ENCODE measurements at regions of chr1 and their contacts with region 1.

Region 1: DNA sequence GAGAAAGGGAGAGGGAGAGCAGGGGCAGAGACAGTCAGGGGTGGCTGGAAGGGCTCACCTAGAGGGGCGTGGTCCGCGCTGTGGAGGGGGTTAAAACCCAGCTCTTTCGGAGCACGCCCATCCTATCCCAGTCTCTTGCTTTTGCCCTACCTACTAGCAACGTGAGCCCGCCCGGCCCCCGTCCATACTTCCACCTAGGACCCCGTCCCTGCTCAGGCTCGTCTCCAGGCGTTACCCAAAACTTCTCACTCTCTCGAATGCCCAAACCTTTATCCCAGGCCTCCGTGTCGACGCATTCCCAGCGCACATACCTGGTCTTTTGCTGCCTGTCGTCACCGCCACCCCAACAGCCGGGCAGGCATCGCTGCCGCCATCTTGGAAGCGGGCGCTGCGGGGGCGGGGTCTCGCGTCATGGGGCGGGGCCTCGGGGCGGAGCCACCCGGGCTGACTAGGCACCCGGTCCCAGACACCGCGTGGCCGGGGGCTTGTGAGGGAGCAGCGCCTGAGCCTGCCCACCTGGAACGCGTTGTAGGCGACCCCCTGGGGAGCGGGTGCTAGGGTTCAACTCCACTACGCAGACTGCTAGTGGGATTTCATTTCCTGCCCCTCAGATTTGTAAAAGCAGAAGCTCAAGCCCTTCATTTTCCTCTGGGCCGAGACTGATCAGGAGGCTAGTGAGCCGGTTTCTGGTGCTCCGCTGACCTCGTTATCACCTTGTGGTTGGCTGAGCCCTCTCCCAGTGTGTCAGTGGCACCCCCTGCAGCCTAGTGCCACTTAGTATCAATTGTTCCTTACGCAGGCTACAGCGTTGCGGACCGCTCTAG is at the start of gene B4GALT3:
- DNase-seq: peak; percentile 98
- ATAC-seq: peak; percentile 86
- H3K4me3 Mint-ChIP-seq: peak within 1 kb of the TSS; percentile 91
- H3K27ac Mint-ChIP-seq: peak within 1 kb of the TSS; percentile 98
- H3K4me1 Mint-ChIP-seq: peaks cover 57% of the 10 kb centered on the region
- H3K27me3 Mint-ChIP-seq: no peaks in the 10 kb centered on the region
- total RNA-seq, gene B4GALT3: 40.5 to 51.8 TPM

Region 2: DNA sequence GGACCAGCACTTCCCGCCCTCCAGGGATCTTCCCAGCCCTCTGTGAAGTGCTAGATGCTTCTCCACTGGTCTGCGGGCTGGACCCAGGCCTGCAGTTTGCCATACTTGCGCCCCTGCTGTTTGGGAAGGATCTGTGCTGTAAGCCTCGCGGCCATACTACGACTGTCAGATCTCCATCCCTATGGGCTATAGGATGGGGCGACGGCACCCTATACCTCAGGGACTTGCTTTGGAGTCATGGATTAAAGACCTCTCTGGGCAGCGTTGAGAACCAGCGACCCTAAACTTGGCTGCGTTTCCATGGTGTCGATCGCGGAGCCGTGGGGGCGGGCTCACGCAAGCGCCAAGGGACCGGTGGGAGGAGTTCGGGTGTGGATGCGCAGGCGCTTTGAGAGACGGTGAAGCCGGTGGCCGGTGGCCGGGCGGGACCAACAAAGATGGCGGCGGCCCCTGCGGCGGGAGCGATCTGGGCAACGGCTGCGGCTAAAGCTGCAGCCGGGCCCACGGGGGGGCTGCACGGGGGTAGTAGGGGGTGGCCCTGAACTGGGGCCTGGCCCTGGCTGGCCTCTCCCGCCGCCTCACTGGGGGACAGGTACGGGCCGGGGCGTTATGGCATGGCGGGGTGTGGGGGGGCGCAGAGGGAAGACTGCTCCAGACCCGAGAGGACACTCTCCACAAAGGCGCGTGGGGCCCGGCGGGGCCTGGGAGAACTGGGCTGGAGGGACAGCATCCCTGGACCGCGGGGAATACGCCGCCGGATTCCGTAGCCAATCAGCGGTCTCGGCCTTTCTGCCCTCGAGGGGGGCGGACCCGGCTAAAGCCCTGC is 18.0 kb before region 1 on chr1 and contains the start of gene USP21:
- CTCF ChIA-PET with region 1: interaction called, 6 read pairs
- POLR2A ChIA-PET with region 1: interaction called, 5 read pairs
- intact Hi-C with region 1: loop called (anchors 1 to 2 kb)
- DNase-seq: peak; percentile 95
- ATAC-seq: peak; percentile 96
- H3K4me3 Mint-ChIP-seq: peak within 1 kb of the TSS; percentile 79
- H3K27ac Mint-ChIP-seq: peak within 1 kb of the TSS; percentile 82
- H3K4me1 Mint-ChIP-seq: peaks cover 50% of the 10 kb centered on the region
- H3K27me3 Mint-ChIP-seq: no peaks in the 10 kb centered on the region
- total RNA-seq, gene USP21: 25.1 to 32.0 TPM

Region 3: DNA sequence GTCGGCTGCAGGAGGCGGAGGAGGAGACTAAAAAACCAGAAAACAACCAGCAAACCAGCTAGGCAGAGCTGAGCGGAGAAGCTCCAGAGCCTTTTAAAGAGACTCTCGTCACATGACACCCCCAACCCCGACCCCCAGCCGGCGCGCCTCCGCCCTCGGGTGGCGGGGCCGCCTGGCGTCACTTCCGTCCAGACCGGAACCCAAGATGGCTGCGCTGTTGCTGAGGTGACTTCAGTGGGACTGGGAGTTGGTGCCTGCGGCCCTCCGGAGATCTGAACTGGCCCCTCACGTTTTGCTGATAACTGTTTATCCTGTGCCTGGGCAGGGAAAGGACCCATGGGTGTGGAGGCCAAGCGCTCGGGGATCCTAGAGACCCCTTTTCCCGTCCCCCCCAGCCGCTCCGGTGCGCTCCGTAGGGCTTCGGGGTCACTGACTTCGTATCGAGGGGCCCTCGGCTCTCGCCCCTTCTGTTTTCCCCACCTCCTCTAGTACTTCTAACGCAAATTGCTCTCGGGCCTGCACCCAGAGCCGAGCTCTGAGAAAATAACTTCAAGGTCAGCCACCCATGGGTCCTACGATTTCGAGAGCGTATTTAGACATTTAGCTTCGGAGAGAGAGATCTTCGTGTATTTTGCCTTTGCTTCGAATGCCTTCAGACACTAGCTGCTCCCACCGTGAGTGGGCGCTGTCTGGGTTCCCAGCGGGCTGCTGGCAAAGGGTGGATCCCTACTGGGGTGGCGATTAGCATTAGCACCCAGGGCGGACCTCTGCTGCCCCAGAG is 137.1 kb after region 1 on chr1 and contains the start of gene SDHC:
- CTCF ChIA-PET with region 1: no interaction called
- POLR2A ChIA-PET with region 1: no interaction called
- intact Hi-C with region 1: loop called in 1 of 2 experiments (anchors 1 kb)
- DNase-seq: peak; percentile 94
- ATAC-seq: peak; percentile 98
- H3K4me3 Mint-ChIP-seq: peak within 1 kb of the TSS; percentile 96
- H3K27ac Mint-ChIP-seq: peak within 1 kb of the TSS; percentile 96
- H3K4me1 Mint-ChIP-seq: peaks cover 21% of the 10 kb centered on the region
- H3K27me3 Mint-ChIP-seq: no peaks in the 10 kb centered on the region
- total RNA-seq, gene SDHC: 191 to 235 TPM

Region 4: GRCh38 chr1:161402446-161402845 is 225.1 kb after region 1 on chr1:
- CTCF ChIA-PET with region 1: no interaction called
- POLR2A ChIA-PET with region 1: no interaction called
- intact Hi-C with region 1: no loop called
- DNase-seq: no peak
- ATAC-seq: no peak
- H3K4me3 Mint-ChIP-seq: no peak overlapping the region
- H3K27ac Mint-ChIP-seq: no peak overlapping the region
- H3K4me1 Mint-ChIP-seq: peaks cover 34% of the 10 kb centered on the region
- H3K27me3 Mint-ChIP-seq: peaks cover 9% of the 10 kb centered on the region

Measured in activated CD4-positive, alpha-beta T cell treated with anti-CD3 and anti-CD28 coated beads for 36 hours (primary cell).